PC-3 (cell line): ENCODE measurements at regions of chr10 and their contacts with region 1.

Region 1: GRCh38 chr10:13087986-13088618 is 11.9 kb upstream of the OPTN start:
- DNase-seq: peak; percentile 55
- ATAC-seq: peak; percentile 89
- H3K4me3 ChIP-seq: no peak overlapping the region
- H3K27ac ChIP-seq: peak overlapping the region; percentile 56
- H3K4me1 ChIP-seq: peaks cover 6% of the 10 kb centered on the region; the same call in 1 of the 2 replicates
- H3K27me3 ChIP-seq: no peaks in the 10 kb centered on the region
- CTCF ChIP-seq: no peak

Region 2: GRCh38 chr10:12993595-12993994 is 94.5 kb before region 1 on chr10:
- CTCF ChIA-PET with region 1: no interaction called
- POLR2A ChIA-PET with region 1: interaction called, 10 read pairs
- intact Hi-C with region 1: no loop called
- DNase-seq: no peak
- ATAC-seq: no peak
- H3K4me3 ChIP-seq: no peak overlapping the region
- H3K27ac ChIP-seq: no peak overlapping the region
- H3K4me1 ChIP-seq: no peaks in the 10 kb centered on the region
- H3K27me3 ChIP-seq: no peaks in the 10 kb centered on the region
- CTCF ChIP-seq: no peak

Region 3: GRCh38 chr10:13062803-13063202 is 25.3 kb before region 1 on chr10:
- CTCF ChIA-PET with region 1: no interaction called
- POLR2A ChIA-PET with region 1: interaction called, 28 read pairs
- intact Hi-C with region 1: no loop called
- DNase-seq: peak; percentile 28
- ATAC-seq: no peak; the same call in 1 of the 2 replicates
- H3K4me3 ChIP-seq: no peak overlapping the region
- H3K27ac ChIP-seq: no peak overlapping the region
- H3K4me1 ChIP-seq: no peaks in the 10 kb centered on the region
- H3K27me3 ChIP-seq: no peaks in the 10 kb centered on the region
- CTCF ChIP-seq: no peak

Region 4: GRCh38 chr10:13099666-13100348 is 11.7 kb after region 1 on chr10 and contains the start of gene OPTN:
- CTCF ChIA-PET with region 1: interaction called, 5 read pairs
- POLR2A ChIA-PET with region 1: no interaction called
- intact Hi-C with region 1: loop called (anchors 1 kb)
- DNase-seq: peak; percentile 59
- ATAC-seq: peak; percentile 76
- H3K4me3 ChIP-seq: peak within 1 kb of the TSS; percentile 91
- H3K27ac ChIP-seq: peak within 1 kb of the TSS; percentile 44
- H3K4me1 ChIP-seq: no peaks in the 10 kb centered on the region
- H3K27me3 ChIP-seq: no peaks in the 10 kb centered on the region
- CTCF ChIP-seq: peak; percentile 75
- total RNA-seq, gene OPTN: 7.9 and 10.1 TPM in 2 replicates

Region 5: DNA sequence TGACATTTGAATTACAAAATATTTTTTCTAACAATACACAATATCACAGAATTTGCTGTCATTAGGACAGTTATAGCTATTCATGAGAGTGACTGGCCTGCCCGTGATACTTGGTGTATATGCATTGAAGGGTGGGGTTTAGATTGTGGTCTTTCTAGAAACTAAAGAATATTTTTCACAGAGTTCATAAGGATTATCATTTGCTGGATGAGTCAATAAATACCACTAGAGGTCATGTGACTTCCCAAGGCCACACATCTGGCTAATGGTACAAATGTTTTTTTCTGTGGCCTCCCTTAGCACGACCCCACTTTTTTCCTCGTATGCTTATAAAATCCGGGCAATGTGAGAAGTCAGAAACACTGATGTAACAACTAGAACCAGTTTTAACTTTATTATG is 17.1 kb after region 1 on chr10:
- CTCF ChIA-PET with region 1: interaction called, 5 read pairs
- POLR2A ChIA-PET with region 1: interaction called, 10 read pairs
- intact Hi-C with region 1: no loop called
- DNase-seq: no peak
- ATAC-seq: no peak
- H3K4me3 ChIP-seq: no peak overlapping the region
- H3K27ac ChIP-seq: no peak overlapping the region
- H3K4me1 ChIP-seq: no peaks in the 10 kb centered on the region
- H3K27me3 ChIP-seq: no peaks in the 10 kb centered on the region
- CTCF ChIP-seq: no peak